ENCODE measurements at regions of chr12 and their contacts with region 1.

Region 1: DNA sequence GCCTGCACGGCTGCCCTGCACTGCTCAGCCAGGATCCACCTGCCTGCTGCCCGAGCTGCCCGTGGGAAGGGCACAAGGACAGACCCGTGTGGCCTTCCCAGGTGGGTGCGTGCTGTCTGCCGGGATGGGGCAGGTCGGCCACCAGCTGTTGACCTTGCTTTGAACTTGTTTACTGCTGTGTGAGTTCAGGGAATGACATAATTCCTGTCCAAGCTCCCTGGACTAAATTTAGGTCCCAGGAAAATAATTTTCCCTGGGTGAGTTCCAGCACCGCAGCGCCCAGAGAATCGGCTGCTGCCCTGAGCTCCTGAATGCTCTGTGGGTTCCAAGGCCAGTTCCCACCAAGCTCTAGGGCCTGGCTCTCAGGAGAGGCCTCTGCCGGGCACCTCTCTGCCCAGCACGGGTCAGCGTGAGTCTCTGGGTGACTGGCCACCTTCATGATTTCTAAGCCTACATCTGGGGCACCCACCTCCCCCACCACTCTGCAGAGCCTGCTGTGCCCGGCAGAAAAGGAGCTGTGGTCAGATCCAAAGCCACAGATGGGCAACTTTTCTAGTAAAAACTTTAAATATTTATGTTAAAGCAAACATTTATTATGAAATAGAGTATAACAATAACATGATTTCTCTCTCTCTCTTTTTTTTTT is 27.2 kb upstream of the MLXIP start:
- DNase-seq: no peak
- H3K4me3 ChIP-seq: no peak overlapping the region
- H3K27ac ChIP-seq: peak overlapping the region in 4 of 8 donors; percentile 13 to 54 (median 38)
- H3K4me1 ChIP-seq: peaks cover 0 to 21% (median 10%) of the 10 kb centered on the region in 6 donors
- H3K27me3 ChIP-seq: no peaks in the 10 kb centered on the region
- CTCF ChIP-seq: no peak
- POLR2A ChIP-seq: no peak

Region 2: GRCh38 chr12:121610239-121611149 is 440.9 kb before region 1 on chr12:
- intact Hi-C with region 1: no loop called
- DNase-seq: no peak
- H3K4me3 ChIP-seq: no peak overlapping the region
- H3K27ac ChIP-seq: peak overlapping the region in 6 of 8 donors; percentile 54 to 63 (median 55)
- H3K4me1 ChIP-seq: peaks cover 0 to 13% (median 2%) of the 10 kb centered on the region in 6 donors
- H3K27me3 ChIP-seq: no peaks in the 10 kb centered on the region
- CTCF ChIP-seq: no peak
- POLR2A ChIP-seq: no peak

Region 3: GRCh38 chr12:121829250-121829918 is 222.0 kb before region 1 on chr12:
- intact Hi-C with region 1: no loop called
- DNase-seq: no peak
- H3K4me3 ChIP-seq: no peak overlapping the region
- H3K27ac ChIP-seq: peak overlapping the region in 2 of 8 donors; percentile 27 to 42
- H3K4me1 ChIP-seq: peaks cover 0 to 11% (median 0%) of the 10 kb centered on the region in 6 donors
- H3K27me3 ChIP-seq: no peaks in the 10 kb centered on the region
- CTCF ChIP-seq: no peak
- POLR2A ChIP-seq: no peak

Region 4: GRCh38 chr12:122123051-122123760 is 71.9 kb after region 1 on chr12:
- intact Hi-C with region 1: loop called (anchors 2 kb)
- DNase-seq: peak; percentile 78
- H3K4me3 ChIP-seq: peak overlapping the region in 1 of 8 donors; percentile 28
- H3K27ac ChIP-seq: peak overlapping the region in 2 of 8 donors; percentile 18 to 45
- H3K4me1 ChIP-seq: peaks cover 6 to 76% (median 36%) of the 10 kb centered on the region in 6 donors
- H3K27me3 ChIP-seq: no peaks in the 10 kb centered on the region
- CTCF ChIP-seq: peak; percentile 36 to 85 (median 78)
- POLR2A ChIP-seq: no peak

Region 5: DNA sequence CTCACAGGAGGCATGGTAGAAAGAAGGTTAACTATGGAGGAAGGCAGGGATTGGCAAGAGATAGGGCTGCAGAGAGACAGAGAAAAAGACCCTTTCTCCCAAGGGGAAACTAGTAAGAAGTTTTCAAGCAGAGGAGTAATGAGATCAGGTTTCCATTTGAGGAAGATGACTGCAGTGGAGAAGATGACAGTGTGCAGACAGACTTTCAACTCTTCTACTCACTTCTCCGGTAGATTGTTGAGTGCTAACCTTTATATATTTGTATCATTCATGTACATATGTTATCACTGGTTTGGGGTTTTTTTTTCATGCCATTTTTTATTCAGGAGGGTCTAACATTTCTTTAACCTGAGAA is 146.2 kb after region 1 on chr12:
- intact Hi-C with region 1: loop called (anchors 5 kb)
- DNase-seq: no peak
- H3K4me3 ChIP-seq: no peak overlapping the region
- H3K27ac ChIP-seq: no peak overlapping the region
- H3K4me1 ChIP-seq: peaks cover 0 to 2% (median 1%) of the 10 kb centered on the region in 6 donors
- H3K27me3 ChIP-seq: peaks cover 0 to 58% (median 20%) of the 10 kb centered on the region in 7 donors
- CTCF ChIP-seq: no peak
- POLR2A ChIP-seq: no peak

Measured in spleen (tissue), 13 donors.